Transverse colon (tissue), 4 donors: ENCODE measurements at regions of chr7 and their contacts with region 1.

Region 1: GRCh38 chr7:81887098-81888090 is 117.5 kb upstream of the HGF start:
- DNase-seq: no peak
- H3K4me3 ChIP-seq: no peak overlapping the region
- H3K27ac ChIP-seq: no peak overlapping the region
- H3K4me1 ChIP-seq: no peaks in the 10 kb centered on the region
- H3K27me3 ChIP-seq: no peaks in the 10 kb centered on the region
- CTCF ChIP-seq: no peak
- EP300 ChIP-seq: no peak
- POLR2A ChIP-seq: no peak

Region 2: DNA sequence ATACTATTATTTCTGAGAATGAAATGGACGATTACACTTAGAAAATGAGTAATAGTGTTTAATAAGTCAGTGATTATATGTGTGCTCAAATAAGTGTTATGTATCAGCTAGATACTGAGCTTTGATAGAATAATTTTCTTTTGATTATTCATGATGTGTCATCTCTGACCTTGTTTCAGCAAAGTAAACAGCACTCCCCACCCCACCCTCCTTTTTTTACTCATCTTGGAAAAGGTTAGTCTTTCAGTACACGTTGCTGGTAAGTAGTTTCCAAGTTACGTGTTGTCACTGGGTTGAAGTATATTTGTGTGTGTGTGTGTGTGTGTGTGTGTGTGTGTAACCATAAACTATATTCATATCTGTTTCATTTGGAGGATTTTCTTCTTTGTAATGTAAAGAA is 1668.7 kb before region 1 on chr7:
- in situ Hi-C with region 1: no loop called
- intact Hi-C with region 1: loop called (anchors 5 kb)
- DNase-seq: no peak
- H3K4me3 ChIP-seq: no peak overlapping the region
- H3K27ac ChIP-seq: no peak overlapping the region
- H3K4me1 ChIP-seq: no peaks in the 10 kb centered on the region
- H3K27me3 ChIP-seq: no peaks in the 10 kb centered on the region
- CTCF ChIP-seq: no peak
- EP300 ChIP-seq: no peak
- POLR2A ChIP-seq: no peak

Region 3: GRCh38 chr7:81075150-81075549 is 812.2 kb before region 1 on chr7:
- in situ Hi-C with region 1: no loop called
- intact Hi-C with region 1: no loop called
- DNase-seq: no peak
- H3K4me3 ChIP-seq: no peak overlapping the region
- H3K27ac ChIP-seq: no peak overlapping the region
- H3K4me1 ChIP-seq: no peaks in the 10 kb centered on the region
- H3K27me3 ChIP-seq: no peaks in the 10 kb centered on the region
- CTCF ChIP-seq: no peak
- EP300 ChIP-seq: no peak
- POLR2A ChIP-seq: no peak

Region 4: DNA sequence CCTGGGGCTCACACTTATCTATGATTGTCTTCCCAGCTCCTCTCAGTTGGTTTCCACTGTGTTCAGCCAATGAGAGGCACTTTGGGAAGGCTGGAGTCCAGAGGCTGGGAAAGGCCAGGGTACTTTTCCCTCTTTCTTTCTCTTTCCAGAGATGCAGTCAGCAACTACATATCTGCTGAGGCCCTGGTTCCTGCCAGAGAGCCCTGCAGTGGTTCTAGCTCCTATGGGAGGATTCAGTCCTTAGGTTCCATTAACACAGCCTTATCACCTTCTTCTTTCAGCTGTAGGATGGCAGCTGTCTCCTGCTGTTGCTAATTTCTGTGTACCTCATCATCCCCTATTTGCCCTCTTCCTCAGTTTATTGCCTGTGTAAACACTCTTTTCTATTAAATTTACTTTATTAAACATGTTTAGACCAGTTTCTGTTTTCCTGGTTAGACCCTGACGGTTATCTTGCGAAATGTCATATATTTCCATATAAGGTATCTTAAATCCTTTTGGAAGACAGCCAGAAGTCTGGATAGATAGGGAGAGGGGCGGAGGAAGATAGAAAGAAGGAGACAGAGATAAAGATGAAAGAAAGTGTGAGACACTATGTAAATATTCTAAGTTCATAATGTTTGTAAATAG is 217.8 kb before region 1 on chr7:
- in situ Hi-C with region 1: no loop called
- intact Hi-C with region 1: no loop called
- DNase-seq: no peak
- H3K4me3 ChIP-seq: no peak overlapping the region
- H3K27ac ChIP-seq: no peak overlapping the region
- H3K4me1 ChIP-seq: no peaks in the 10 kb centered on the region
- H3K27me3 ChIP-seq: no peaks in the 10 kb centered on the region
- CTCF ChIP-seq: no peak
- EP300 ChIP-seq: no peak
- POLR2A ChIP-seq: no peak

Region 5: GRCh38 chr7:81694711-81695110 is 192.7 kb before region 1 on chr7:
- in situ Hi-C with region 1: no loop called
- intact Hi-C with region 1: no loop called
- DNase-seq: no peak
- H3K4me3 ChIP-seq: no peak overlapping the region
- H3K27ac ChIP-seq: no peak overlapping the region
- H3K4me1 ChIP-seq: no peaks in the 10 kb centered on the region
- H3K27me3 ChIP-seq: no peaks in the 10 kb centered on the region
- CTCF ChIP-seq: no peak
- EP300 ChIP-seq: no peak
- POLR2A ChIP-seq: no peak

Region 6: GRCh38 chr7:81791568-81792518 is 95.6 kb before region 1 on chr7:
- in situ Hi-C with region 1: no loop called
- intact Hi-C with region 1: no loop called
- DNase-seq: no peak
- H3K4me3 ChIP-seq: no peak overlapping the region
- H3K27ac ChIP-seq: no peak overlapping the region
- H3K4me1 ChIP-seq: peaks cover 0 to 3% (median 0%) of the 10 kb centered on the region in 4 donors
- H3K27me3 ChIP-seq: no peaks in the 10 kb centered on the region
- CTCF ChIP-seq: no peak
- EP300 ChIP-seq: no peak
- POLR2A ChIP-seq: no peak